B cell (primary cell): ENCODE measurements at regions of chr2 and their contacts with region 1.

Region 1: GRCh38 chr2:47272031-47272864 is 117.1 kb upstream of the STPG4 start:
- DNase-seq: peak; percentile 73
- ATAC-seq: peak; percentile 88
- H3K4me3 ChIP-seq: peak overlapping the region in 4 of 5 experiments; percentile 43 to 56 (median 48)
- H3K4me3 Mint-ChIP-seq: peak overlapping the region; percentile 85
- H3K27ac ChIP-seq: peak overlapping the region in 1 of 2 donors; percentile 4
- H3K27ac Mint-ChIP-seq: peak overlapping the region; percentile 61
- H3K4me1 ChIP-seq: peaks cover 18 to 27% of the 10 kb centered on the region in 2 donors
- H3K4me1 Mint-ChIP-seq: peaks cover 23% of the 10 kb centered on the region
- H3K27me3 ChIP-seq: peaks cover 0 to 2% (median 0%) of the 10 kb centered on the region in 4 experiments
- H3K27me3 Mint-ChIP-seq: no peaks in the 10 kb centered on the region
- CTCF ChIP-seq: peak; percentile 99

Region 2: GRCh38 chr2:46984642-46985476 is 287.4 kb before region 1 on chr2:
- CTCF ChIA-PET with region 1: interaction called, 19 read pairs
- POLR2A ChIA-PET with region 1: no interaction called
- intact Hi-C with region 1: no loop called
- DNase-seq: peak; percentile 52
- ATAC-seq: peak; percentile 7
- H3K4me3 ChIP-seq: peak overlapping the region in 2 of 5 experiments; percentile 5 to 60
- H3K4me3 Mint-ChIP-seq: peak overlapping the region; percentile 90
- H3K27ac ChIP-seq: peak overlapping the region; percentile 80 to 83
- H3K27ac Mint-ChIP-seq: peak overlapping the region; percentile 99
- H3K4me1 ChIP-seq: peaks cover 79 to 84% of the 10 kb centered on the region in 2 donors
- H3K4me1 Mint-ChIP-seq: peaks cover 88% of the 10 kb centered on the region
- H3K27me3 ChIP-seq: no peaks in the 10 kb centered on the region
- H3K27me3 Mint-ChIP-seq: no peaks in the 10 kb centered on the region
- CTCF ChIP-seq: no peak

Region 3: DNA sequence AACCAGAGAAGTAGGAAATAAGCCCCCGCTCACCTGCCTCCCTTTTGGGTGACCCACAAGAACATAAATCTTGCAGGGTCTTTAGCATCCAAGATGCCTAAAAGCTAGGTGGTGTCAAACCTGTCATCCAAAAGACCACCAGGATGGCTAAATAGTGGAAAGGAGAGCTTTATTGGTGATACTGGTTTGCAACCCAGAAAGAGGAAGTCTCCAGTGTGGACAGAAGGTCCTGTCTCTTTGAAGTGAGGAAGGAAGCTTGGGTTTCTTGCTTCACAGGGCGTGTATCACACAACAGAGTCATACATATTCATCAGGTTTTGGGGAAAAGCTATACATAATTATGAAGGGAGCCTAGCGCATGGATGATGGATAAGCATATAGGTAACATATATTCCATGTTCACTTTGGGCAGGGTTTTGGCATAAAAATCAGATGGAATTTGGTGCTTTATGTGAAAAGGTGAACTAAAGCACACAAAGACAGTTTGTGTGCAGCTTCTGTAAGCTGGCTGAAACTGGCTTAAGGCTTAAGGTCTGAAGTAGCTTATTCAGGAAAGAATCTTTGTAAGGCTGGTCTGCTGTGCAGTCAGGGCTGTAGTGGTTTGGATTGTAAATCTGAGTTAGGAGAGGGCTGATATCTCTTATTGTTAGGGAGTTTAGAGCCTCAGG is 28.5 kb after region 1 on chr2:
- CTCF ChIA-PET with region 1: interaction called, 10 read pairs
- POLR2A ChIA-PET with region 1: interaction called, 6 read pairs
- intact Hi-C with region 1: loop called (anchors 2 kb)
- DNase-seq: peak; percentile 72
- ATAC-seq: peak; percentile 91
- H3K4me3 ChIP-seq: peak overlapping the region; percentile 5 to 58 (median 36)
- H3K4me3 Mint-ChIP-seq: peak overlapping the region; percentile 81
- H3K27ac ChIP-seq: peak overlapping the region; percentile 49 to 62
- H3K27ac Mint-ChIP-seq: peak overlapping the region; percentile 53
- H3K4me1 ChIP-seq: peaks cover 27 to 35% of the 10 kb centered on the region in 2 donors
- H3K4me1 Mint-ChIP-seq: peaks cover 40% of the 10 kb centered on the region
- H3K27me3 ChIP-seq: peaks cover 0 to 9% (median 0%) of the 10 kb centered on the region in 4 experiments
- H3K27me3 Mint-ChIP-seq: no peaks in the 10 kb centered on the region
- CTCF ChIP-seq: no peak

Region 4: GRCh38 chr2:47309952-47310800 is 37.9 kb after region 1 on chr2:
- CTCF ChIA-PET with region 1: interaction called, 6 read pairs
- POLR2A ChIA-PET with region 1: interaction called, 3 read pairs
- intact Hi-C with region 1: loop called (anchors 1 kb)
- DNase-seq: peak; percentile 73
- ATAC-seq: peak; percentile 81
- H3K4me3 ChIP-seq: peak overlapping the region in 2 of 5 experiments; percentile 5 to 46
- H3K4me3 Mint-ChIP-seq: peak overlapping the region; percentile 77
- H3K27ac ChIP-seq: peak overlapping the region; percentile 51 to 55
- H3K27ac Mint-ChIP-seq: peak overlapping the region; percentile 98
- H3K4me1 ChIP-seq: peaks cover 27 to 34% of the 10 kb centered on the region in 2 donors
- H3K4me1 Mint-ChIP-seq: peaks cover 43% of the 10 kb centered on the region
- H3K27me3 ChIP-seq: no peaks in the 10 kb centered on the region
- H3K27me3 Mint-ChIP-seq: no peaks in the 10 kb centered on the region
- CTCF ChIP-seq: no peak